Activated CD4-positive, alpha-beta T cell treated with anti-CD3 and anti-CD28 coated beads for 36 hours (primary cell): ENCODE measurements at regions of chr14 and their contacts with region 1.

Region 1: GRCh38 chr14:22918804-22919600 is at the start of gene RBM23:
- DNase-seq: peak; percentile 100
- ATAC-seq: peak; percentile 97
- H3K4me3 Mint-ChIP-seq: peak within 1 kb of the TSS; percentile 92
- H3K27ac Mint-ChIP-seq: peak within 1 kb of the TSS; percentile 99
- H3K4me1 Mint-ChIP-seq: peaks cover 40% of the 10 kb centered on the region
- H3K27me3 Mint-ChIP-seq: no peaks in the 10 kb centered on the region
- total RNA-seq, gene RBM23: 61.6 to 68.6 TPM

Region 2: DNA sequence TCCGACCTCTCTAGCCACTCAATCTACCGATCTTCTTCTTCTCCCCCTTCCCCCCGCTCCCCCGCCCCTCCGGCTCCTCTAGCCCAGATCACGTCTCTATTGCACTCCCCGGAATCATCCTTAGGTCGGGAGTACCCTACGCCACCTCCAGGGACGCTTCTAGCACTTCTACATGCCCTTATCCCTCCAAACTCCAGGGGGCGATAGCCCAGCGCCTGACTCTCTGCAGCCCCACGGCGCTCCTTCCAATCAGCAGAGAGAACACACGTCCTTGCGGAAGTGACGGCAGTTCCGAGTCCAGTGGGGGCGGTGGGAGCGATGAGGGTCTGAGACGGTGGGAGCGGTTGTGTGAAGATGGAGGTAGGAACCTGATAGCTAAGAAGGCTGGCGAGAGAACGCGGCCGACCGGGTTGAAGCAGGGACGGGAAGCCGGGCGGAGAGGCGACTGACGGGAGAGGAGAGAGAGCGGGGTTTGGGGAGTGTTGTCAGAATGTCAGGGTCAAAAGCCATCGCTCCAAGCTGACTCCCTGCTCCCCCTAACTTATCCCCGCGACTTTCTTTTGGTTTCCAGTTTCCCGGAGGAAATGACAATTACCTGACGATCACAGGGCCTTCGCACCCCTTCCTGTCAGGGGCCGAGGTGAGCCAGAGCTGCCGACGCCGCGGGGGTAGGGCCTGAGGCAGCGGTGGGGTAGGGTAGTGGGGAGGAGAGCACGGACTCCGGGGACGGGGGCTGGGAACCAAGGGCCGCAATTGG is 1441.9 kb before region 1 on chr14 and contains the starts of genes RAB2B and TOX4:
- CTCF ChIA-PET with region 1: no interaction called
- POLR2A ChIA-PET with region 1: no interaction called
- intact Hi-C with region 1: loop called in 1 of 2 experiments (anchors 2 kb)
- DNase-seq: peak; percentile 96
- ATAC-seq: peak; percentile 98
- H3K4me3 Mint-ChIP-seq: peak within 1 kb of the TSS; percentile 99
- H3K27ac Mint-ChIP-seq: peak within 1 kb of the TSS; percentile 100
- H3K4me1 Mint-ChIP-seq: peaks cover 22% of the 10 kb centered on the region
- H3K27me3 Mint-ChIP-seq: no peaks in the 10 kb centered on the region
- total RNA-seq, gene RAB2B: 21.2 to 22.0 TPM
- total RNA-seq, gene TOX4: 79.5 to 85.6 TPM

Region 3: DNA sequence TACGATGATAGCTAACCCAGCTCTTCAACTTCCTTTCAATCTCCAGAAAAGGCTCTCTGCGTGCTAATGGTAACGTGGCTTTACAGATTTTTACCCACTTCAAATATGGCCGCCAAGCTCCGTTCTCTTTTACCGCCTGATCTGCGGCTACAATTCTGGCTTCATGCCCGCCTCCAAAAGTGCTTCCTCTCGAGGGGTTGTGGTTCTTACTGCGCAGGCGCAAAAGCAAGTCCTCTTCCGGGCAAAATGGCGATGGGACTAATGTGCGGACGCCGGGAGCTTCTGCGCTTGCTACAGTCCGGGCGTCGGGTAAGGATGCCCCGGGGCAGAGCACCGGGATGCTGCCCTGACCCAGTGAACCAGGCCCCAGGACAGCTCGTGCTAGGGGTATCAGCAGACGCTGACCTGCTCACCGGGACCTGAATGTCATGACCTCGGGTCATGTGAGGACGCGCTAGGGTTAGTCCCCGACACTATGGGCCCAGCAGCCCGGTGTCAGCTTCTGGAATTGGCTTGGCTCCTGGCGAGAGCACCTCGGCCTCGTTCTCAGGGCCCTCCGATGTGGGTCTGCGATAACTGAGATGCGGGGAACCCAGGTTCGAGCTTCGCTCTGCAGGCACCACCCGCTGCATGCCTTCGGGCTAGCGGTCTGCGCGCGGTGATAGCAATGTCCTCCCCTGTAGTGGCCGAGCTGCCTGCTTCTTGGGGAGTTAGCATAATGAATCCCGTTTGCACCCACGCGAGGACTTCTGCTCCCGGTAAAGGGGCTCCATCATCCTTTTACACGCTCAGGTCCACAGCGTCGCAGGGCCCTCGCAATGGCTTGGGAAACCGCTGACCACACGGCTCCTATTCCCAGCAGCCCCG is 152.3 kb before region 1 on chr14 and contains the start of gene OXA1L:
- CTCF ChIA-PET with region 1: no interaction called
- POLR2A ChIA-PET with region 1: interaction called, 3 read pairs
- intact Hi-C with region 1: loop called in 1 of 2 experiments (anchors 1 kb)
- DNase-seq: peak; percentile 98
- ATAC-seq: peak; percentile 87
- H3K4me3 Mint-ChIP-seq: peak within 1 kb of the TSS; percentile 90
- H3K27ac Mint-ChIP-seq: peak within 1 kb of the TSS; percentile 99
- H3K4me1 Mint-ChIP-seq: peaks cover 32% of the 10 kb centered on the region
- H3K27me3 Mint-ChIP-seq: no peaks in the 10 kb centered on the region
- total RNA-seq, gene OXA1L: 136 to 148 TPM

Region 4: DNA sequence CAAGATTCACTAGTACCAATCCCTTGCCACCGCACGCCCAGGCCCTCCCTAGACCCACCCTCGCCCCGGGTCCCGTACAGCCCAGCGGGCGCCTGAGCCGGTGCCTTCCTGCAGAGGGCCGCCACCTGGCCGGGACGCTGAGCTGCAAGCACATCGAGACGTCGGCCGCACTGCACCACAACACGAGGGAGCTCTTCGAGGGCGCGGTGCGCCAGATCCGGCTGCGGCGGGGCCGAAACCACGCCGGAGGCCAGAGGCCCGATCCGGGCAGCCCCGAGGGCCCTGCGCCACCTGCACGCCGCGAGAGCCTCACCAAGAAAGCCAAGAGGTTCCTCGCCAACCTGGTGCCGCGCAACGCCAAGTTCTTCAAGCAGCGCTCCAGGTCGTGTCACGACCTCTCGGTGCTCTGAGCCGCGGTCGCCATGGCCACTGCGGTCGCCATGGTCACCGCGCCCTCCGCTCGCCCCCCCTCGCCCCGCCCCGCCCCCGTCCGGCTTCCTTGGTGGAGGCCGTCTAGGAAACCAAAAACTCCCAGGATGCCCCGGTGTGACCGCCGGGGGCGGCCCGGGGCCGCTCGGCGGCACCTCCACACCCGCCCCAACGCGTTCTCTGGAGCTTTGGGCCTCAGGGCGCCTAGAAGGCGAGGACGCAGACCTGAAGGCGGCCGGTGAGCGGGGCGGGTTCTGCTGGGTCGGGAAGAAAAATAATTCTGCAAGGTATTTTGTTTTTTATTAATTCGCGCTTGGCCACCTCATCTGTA is 32.3 kb before region 1 on chr14:
- CTCF ChIA-PET with region 1: interaction called, 3 read pairs
- POLR2A ChIA-PET with region 1: interaction called, 4 read pairs
- intact Hi-C with region 1: loop called in 1 of 2 experiments (anchors 1 kb)
- DNase-seq: peak; percentile 85
- ATAC-seq: peak; percentile 63
- H3K4me3 Mint-ChIP-seq: peak overlapping the region; percentile 70
- H3K27ac Mint-ChIP-seq: peak overlapping the region; percentile 83
- H3K4me1 Mint-ChIP-seq: peaks cover 50% of the 10 kb centered on the region
- H3K27me3 Mint-ChIP-seq: peaks cover 2% of the 10 kb centered on the region

Region 5: DNA sequence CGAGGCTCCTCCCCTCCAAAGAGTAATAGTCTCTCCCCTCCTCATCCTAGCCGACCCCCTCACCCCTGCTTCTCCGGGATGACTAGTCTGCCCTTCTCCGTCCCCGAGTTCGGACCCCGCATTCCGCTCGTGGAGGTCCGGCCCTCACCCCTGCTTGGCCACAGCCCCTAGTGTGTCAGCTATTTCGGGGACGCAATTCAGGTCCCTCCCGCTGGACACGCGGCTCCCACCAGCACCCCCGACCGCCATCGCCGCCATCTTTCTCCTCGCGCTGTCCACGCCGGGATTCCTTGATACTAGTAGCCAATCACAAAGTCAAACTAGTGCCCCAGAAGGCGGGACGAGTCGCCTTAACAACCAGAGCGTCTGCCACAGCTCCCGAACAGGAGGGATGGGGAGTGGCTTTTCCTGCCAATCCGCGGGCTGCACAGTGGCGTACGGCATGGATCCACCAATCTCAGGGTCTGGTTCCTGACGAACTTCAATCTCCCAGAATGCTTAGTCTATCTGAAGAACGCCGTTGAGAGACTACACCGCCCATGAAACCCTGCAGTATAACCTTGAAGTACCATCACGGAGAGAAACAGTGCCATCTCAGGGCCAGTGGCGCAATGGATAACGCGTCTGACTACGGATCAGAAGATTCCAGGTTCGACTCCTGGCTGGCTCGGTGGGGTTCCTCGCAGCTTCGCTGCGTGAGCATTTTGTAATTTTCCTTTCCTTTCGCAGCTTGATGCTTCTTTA is 10.3 kb after region 1 on chr14 and contains the start of gene PRMT5:
- CTCF ChIA-PET with region 1: interaction called, 46 read pairs
- POLR2A ChIA-PET with region 1: interaction called, 29 read pairs
- intact Hi-C with region 1: loop called (anchors 1 kb)
- DNase-seq: peak; percentile 99
- ATAC-seq: peak; percentile 98
- H3K4me3 Mint-ChIP-seq: no peak within 1 kb of the TSS
- H3K27ac Mint-ChIP-seq: no peak within 1 kb of the TSS
- H3K4me1 Mint-ChIP-seq: peaks cover 39% of the 10 kb centered on the region
- H3K27me3 Mint-ChIP-seq: no peaks in the 10 kb centered on the region
- total RNA-seq, gene PRMT5: 121 to 151 TPM

Region 6: DNA sequence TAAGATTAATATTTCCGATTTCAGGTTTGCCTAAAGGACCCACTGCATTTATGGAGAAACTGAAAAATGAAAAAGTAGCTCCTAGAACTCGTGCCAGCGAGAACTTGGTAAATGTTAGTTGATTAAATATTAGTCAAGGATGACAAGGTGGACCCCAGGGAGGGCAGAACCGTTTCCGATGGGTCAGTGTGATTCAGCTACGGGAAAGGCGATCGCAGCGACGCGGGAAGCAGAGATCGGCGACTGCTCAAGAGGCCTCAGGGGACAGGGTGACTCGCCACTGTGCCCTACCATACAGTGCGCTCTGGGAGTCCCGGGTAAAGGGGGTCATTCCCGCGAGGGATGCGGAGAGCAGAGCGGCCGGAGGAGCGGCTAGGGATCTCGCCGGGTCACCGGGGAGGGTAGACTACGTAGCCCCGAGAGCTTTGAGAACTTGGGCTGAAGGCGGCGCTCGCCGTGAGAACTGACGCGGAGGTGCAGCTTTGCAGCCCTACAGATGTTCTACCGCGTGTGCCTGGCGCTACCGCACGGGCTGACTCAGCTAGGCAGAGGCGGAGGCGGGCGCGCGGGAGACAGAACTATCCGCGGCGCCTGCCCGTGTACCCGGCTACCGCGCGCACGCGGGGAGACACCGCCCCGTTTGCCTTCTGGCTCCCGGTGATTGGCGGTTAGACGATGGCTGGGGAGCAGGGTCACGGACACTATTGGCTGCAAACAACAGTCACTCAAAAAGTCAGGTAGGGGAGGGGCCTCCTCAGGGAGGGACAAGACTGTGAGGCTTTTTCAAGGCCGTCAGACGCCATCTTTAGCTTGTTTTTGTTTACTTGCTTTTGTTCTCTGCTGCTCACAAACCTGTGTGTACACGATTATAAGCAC is 87.8 kb after region 1 on chr14:
- CTCF ChIA-PET with region 1: interaction called, 3 read pairs
- POLR2A ChIA-PET with region 1: interaction called, 4 read pairs
- intact Hi-C with region 1: loop called in 1 of 2 experiments (anchors 1 kb)
- DNase-seq: peak; percentile 98
- ATAC-seq: peak; percentile 98
- H3K4me3 Mint-ChIP-seq: peak overlapping the region; percentile 95
- H3K27ac Mint-ChIP-seq: peak overlapping the region; percentile 99
- H3K4me1 Mint-ChIP-seq: peaks cover 45% of the 10 kb centered on the region
- H3K27me3 Mint-ChIP-seq: no peaks in the 10 kb centered on the region

Region 7: DNA sequence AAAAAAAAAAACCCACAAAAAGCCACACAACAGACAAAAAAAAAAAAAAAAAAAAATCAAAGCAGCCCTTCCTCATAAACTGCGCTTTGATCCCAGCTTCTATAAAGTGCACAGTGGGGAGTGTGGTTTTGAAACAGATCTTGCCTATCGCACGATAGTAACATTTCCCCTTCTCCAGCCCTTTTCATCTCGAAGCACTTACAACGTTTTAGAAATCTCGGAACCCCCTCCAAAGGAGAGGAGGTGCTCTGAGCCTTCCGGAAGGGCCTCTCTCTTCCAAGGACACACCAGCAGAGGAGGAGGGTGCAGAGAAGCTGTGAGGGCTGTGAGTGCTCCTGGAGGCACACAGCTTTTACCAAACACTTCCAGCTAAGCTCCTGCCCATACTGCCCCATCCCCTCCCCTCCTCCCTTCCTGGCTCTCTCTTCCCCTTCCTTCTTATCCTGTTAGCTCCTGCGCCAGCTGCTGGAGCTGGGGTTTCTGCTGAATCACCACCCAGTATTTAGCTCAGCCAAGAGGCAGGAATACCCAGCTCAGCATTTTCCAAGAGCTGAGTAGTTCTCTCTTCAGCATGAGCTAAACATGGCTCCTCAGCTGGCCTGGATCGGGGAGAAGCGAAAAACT is 236.1 kb after region 1 on chr14:
- CTCF ChIA-PET with region 1: no interaction called
- POLR2A ChIA-PET with region 1: no interaction called
- intact Hi-C with region 1: no loop called
- DNase-seq: no peak
- ATAC-seq: peak; percentile 23
- H3K4me3 Mint-ChIP-seq: no peak overlapping the region
- H3K27ac Mint-ChIP-seq: no peak overlapping the region
- H3K4me1 Mint-ChIP-seq: peaks cover 14% of the 10 kb centered on the region
- H3K27me3 Mint-ChIP-seq: peaks cover 2% of the 10 kb centered on the region

Region 8: DNA sequence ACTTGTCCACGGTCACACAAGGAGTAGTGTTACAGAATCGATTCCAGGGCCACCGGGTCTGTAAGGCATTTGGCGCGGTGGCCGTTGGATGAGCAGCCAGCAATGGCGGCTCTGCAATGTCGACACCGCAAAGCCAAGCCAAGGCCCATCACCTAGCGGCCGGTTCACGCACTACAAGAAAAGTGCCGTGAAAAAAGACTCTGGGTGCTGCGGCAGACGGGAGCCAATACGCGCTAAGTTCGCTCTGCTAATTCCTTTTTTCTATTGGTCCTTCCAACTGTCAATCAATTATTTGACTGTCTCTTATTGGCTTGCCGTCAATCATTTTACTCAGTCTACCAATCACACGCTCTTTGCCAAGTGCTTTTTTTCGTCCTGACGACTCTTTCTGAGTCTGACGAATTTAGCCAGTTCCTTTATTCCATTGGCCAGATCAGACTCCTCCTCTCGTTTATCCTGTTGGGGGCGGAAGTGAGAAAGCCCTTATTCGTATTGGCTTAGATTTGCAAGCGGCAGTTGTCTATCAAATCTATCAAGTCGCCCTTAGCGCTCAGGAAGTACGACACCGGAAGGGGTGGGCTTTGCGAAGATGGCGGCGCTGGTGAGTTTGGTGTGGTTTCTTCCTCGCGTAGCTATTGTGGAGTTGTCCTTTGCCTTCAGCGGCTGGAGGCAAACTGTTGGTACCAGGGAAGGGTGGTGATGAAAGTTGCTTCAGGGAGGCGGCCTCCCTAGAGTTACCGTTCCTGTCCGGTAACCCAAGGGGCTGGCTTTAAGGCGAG is 550.3 kb after region 1 on chr14 and contains the start of gene NGDN:
- CTCF ChIA-PET with region 1: no interaction called
- POLR2A ChIA-PET with region 1: no interaction called
- intact Hi-C with region 1: loop called in 1 of 2 experiments (anchors 1 kb)
- DNase-seq: peak; percentile 95
- ATAC-seq: peak; percentile 97
- H3K4me3 Mint-ChIP-seq: no peak within 1 kb of the TSS
- H3K27ac Mint-ChIP-seq: no peak within 1 kb of the TSS
- H3K4me1 Mint-ChIP-seq: peaks cover 11% of the 10 kb centered on the region
- H3K27me3 Mint-ChIP-seq: no peaks in the 10 kb centered on the region
- total RNA-seq, gene NGDN: 53.0 to 57.8 TPM